Motor neuron (in vitro differentiated cells): ENCODE measurements at regions of chr18 and their contacts with region 1.

Region 1: GRCh38 chr18:36309436-36310391 is 12.2 kb downstream of the FHOD3 start:
- ATAC-seq: peak; percentile 46 to 90 (median 75)
- H3K4me3 ChIP-seq: no peak overlapping the region
- H3K27ac ChIP-seq: no peak overlapping the region
- H3K4me1 ChIP-seq: peaks cover 0 to 12% of the 10 kb centered on the region in 2 donors

Region 2: DNA sequence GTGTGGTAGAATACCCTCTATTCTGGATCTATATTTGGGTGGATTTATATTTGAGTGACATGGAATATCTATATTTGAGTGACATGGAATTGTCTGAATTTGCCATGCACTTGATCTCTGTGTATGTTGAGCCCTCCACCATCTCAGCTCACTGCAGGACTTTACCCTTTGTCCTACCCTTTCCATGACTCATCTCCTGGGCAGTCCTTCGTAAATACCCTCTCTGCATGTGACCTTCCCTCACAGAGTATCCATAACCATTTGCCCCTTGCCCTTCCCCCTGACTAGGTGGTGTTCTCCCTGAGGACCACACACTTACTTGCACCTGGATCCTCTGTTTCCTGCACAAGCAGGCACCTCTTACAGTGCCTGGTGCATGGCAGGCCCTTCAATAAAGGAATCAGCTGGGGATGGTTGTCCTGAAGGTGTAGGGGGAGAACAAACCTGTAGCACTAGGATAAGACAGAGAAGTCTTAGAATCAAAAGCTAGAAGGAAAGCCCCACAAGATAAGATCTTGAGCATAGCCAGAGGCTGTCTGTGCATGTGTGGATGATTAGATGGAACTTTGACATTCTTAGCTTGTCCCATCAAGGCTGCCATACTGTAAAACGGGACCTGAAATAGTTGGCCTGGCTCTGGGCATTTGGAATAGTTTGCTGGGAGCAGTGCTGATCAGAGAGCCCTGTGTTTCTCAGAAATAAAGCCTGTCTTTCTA is 218.2 kb after region 1 on chr18:
- in situ Hi-C with region 1: no loop called
- ATAC-seq: no peak
- H3K4me3 ChIP-seq: no peak overlapping the region
- H3K27ac ChIP-seq: no peak overlapping the region
- H3K4me1 ChIP-seq: peaks cover 0 to 2% of the 10 kb centered on the region in 2 donors

Region 3: DNA sequence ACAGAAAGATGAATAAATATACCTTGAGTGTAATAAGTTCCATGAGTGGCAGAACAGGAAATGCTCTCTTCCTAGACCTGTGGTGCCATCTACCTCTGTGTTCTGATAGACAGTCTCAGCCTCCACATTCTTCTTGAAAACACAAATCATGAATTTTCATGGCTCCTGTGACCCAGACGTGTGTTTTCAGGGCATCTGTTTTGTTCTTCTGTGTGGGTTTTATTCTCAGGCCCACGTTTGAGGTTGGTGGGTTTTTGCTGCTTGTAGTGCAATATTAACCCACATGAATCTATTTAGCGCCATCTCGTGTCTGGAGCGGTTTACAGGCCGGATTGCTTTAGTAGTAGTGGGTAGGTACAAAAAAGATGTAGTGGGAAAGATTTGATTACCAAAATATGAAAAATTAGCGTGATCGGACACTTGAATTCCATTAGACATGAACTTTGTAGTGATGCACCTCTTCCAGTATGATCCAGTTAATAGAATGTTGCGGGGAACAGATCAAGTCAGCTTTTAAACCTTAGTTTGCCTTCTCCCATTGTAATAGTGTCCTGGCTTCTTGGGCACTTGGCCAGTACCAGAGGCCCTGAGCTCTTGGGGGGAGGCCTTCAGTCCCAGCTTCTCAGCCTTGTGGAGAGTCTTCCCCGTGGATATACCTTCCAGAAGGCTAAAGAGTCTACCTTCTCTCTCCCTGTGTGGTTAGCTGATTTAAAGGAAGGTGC is 262.6 kb after region 1 on chr18:
- in situ Hi-C with region 1: loop called in 1 of 9 experiments (anchors 25 kb)
- ATAC-seq: peak; percentile 76 to 98 (median 84)
- H3K4me3 ChIP-seq: no peak overlapping the region
- H3K27ac ChIP-seq: no peak overlapping the region
- H3K4me1 ChIP-seq: no peaks in the 10 kb centered on the region

Region 4: DNA sequence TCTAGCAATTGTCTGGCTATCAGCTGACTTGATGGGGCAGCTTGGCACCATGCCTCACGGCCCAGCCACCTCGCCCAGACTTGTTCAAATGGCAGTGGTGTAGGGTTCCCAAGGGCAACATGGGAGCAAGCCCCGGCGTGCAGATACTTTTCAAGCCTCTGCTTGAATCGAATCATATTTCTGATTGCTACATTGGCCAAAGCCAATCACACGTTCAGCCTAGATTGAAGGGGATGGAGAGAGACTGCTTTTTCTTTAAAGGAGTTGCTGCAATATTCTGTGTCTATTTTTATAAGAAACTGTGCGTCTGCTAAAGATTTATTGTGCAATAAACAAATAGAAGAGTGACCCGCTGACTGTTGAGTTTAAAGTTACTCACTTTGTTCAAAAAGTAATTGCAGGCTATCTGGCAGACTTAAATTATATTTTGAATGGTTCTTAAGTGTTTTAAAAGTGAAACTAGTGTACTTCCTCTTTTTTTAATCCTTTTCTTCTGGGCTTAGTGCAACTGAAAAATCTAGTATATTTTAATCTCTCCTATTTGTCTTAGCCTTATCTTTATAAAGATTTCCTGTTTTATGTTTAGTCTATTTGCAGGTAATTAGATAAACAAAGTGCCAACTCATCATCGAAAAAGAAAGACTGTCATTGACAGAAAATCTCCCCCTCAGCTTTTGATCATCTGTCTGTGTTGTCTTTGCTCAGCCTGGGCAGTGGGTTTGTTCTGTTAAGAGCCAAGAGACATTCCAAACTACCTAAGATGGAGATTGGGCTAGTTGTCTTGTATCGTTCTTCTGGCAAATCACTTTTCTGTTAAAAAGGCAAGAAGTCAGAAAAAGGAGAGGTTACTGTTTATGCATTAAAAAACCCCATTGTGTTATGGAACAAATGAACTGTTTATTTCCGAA is 363.0 kb after region 1 on chr18:
- in situ Hi-C with region 1: loop called in 1 of 9 experiments (anchors 25 kb)
- ATAC-seq: peak in 4 of 8 experiments; percentile 31 to 94 (median 52)
- H3K4me3 ChIP-seq: no peak overlapping the region
- H3K27ac ChIP-seq: no peak overlapping the region
- H3K4me1 ChIP-seq: no peaks in the 10 kb centered on the region

Region 5: GRCh38 chr18:36688020-36688965 is 378.6 kb after region 1 on chr18:
- in situ Hi-C with region 1: no loop called
- ATAC-seq: peak in 4 of 8 experiments; percentile 33 to 60 (median 40)
- H3K4me3 ChIP-seq: no peak overlapping the region
- H3K27ac ChIP-seq: no peak overlapping the region
- H3K4me1 ChIP-seq: no peaks in the 10 kb centered on the region